GM23248 (cell line): ENCODE measurements at regions of chr13 and their contacts with region 1.

Region 1: GRCh38 chr13:27006519-27007161 is 165.0 kb downstream of the USP12 start:
- DNase-seq: peak; percentile 63
- H3K4me3 ChIP-seq: peak overlapping the region; percentile 72
- H3K27ac ChIP-seq: no peak overlapping the region
- H3K4me1 ChIP-seq: peaks cover 4% of the 10 kb centered on the region; the same call in 1 of the 2 replicates
- H3K27me3 ChIP-seq: peaks cover 29% of the 10 kb centered on the region; the same call in 1 of the 2 replicates

Region 2: DNA sequence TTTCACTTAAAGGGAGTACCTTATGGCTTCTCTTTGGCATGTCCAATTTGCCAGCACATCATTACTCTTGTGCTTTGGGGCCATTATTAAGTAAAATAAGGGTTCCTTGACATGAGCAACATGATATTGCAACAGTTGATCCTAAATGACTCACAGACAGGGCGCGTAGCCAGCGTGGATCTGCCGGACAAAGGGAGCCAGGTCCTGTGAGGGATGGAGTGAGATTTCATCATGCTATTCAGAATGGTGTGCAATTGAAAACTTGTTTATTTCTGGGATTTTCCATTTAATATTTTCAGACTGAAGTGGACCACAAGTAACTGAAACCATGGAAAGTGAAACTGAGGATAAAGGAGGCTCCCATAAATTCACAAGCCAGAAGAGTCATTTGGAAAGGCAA is 497.8 kb before region 1 on chr13:
- in situ Hi-C with region 1: no loop called
- DNase-seq: peak; percentile 92
- H3K4me3 ChIP-seq: peak overlapping the region; percentile 41
- H3K27ac ChIP-seq: peak overlapping the region; percentile 85
- H3K4me1 ChIP-seq: peaks cover 8% of the 10 kb centered on the region; the same call in 1 of the 2 replicates
- H3K27me3 ChIP-seq: no peaks in the 10 kb centered on the region

Region 3: DNA sequence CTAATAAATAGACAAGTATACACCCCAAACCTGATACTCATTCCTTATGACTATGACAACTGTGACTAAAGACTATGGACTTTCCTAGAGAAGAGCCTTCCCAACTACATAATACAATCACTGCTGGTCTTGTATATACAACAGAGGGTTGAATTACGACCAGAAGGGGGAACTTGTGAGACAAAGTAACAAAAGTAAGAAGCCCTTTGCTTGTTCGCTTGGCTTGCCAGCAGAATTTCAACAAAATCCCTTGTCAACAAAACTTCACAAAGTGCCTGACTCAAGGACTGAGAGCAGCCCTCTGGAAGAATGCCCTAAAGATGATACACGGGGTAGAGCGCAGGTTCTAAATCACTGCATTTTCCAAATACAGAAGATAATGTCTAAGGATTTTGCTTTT is 349.7 kb before region 1 on chr13:
- in situ Hi-C with region 1: no loop called
- DNase-seq: peak; percentile 77
- H3K4me3 ChIP-seq: no peak overlapping the region
- H3K27ac ChIP-seq: no peak overlapping the region
- H3K4me1 ChIP-seq: no peaks in the 10 kb centered on the region
- H3K27me3 ChIP-seq: no peaks in the 10 kb centered on the region

Region 4: DNA sequence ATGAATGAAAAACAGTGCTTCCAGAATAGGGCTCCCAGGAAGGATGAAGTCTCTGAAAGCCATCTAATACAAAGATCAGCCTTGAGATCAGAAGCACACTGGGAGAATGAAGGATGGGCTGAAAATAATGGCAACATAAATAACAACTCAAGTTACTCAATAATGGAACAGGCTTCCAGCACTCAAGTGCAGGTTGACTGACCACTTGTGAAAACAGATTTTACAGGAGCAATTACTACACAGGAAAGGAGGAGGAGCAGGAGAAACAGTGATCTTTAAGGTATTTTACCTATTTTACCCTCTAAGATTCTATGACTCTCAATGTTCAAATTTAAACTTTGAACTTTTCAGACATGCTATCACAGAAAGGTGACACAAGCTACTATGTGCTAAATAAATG is 58.9 kb after region 1 on chr13:
- in situ Hi-C with region 1: loop called (anchors 10 kb)
- DNase-seq: no peak
- H3K4me3 ChIP-seq: no peak overlapping the region
- H3K27ac ChIP-seq: no peak overlapping the region
- H3K4me1 ChIP-seq: no peaks in the 10 kb centered on the region
- H3K27me3 ChIP-seq: no peaks in the 10 kb centered on the region

Region 5: DNA sequence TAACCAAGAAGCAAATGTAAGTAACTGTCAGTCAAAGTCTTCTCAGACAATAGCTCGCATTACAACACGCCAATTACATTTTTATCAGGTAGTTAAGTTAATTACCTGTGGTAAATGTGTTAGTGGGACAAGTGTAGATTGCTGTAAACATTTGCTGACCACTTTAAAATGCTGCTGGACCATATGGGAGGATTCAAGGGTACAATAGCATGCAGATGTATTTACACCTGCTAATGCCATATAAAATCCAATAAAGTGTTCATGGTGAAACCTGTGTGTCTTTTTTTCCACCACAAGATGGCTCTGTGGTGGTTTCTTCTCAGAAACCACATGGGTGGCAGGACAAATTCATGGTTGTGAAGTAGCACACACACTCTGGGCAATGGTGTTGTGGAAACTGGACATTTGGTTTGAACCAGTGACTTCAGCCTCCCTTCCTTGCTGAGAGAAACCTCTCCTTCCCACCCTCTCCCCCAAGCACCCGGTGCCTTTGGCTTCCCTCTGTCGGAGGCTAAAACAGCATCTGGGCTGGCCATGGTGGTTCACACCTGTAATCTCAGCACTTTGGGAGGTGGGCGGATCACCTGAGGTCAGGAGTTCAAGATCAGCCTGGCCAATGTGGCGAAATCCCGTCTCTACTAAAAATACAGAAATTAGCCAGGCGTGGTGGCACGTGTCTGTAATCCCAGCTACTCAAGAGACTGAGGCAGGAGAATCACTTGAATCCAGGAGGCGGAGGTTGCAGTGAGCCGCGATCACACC is 399.7 kb after region 1 on chr13:
- in situ Hi-C with region 1: no loop called
- DNase-seq: peak; percentile 65
- H3K4me3 ChIP-seq: no peak overlapping the region
- H3K27ac ChIP-seq: no peak overlapping the region
- H3K4me1 ChIP-seq: peaks cover 12% of the 10 kb centered on the region
- H3K27me3 ChIP-seq: peaks cover 40% of the 10 kb centered on the region

Region 6: GRCh38 chr13:27455331-27455855 is 448.8 kb after region 1 on chr13:
- in situ Hi-C with region 1: no loop called
- DNase-seq: peak; percentile 16
- H3K4me3 ChIP-seq: peak overlapping the region; percentile 54
- H3K27ac ChIP-seq: no peak overlapping the region
- H3K4me1 ChIP-seq: peaks cover 3% of the 10 kb centered on the region; the same call in 1 of the 2 replicates
- H3K27me3 ChIP-seq: 0 out of 2 replicates have a peak, but pooled peaks cover under 1% of the 10 kb centered on the region